Naive thymus-derived CD4-positive, alpha-beta T cell (primary cell): ENCODE measurements at regions of chr3 and their contacts with region 1.

Region 1: DNA sequence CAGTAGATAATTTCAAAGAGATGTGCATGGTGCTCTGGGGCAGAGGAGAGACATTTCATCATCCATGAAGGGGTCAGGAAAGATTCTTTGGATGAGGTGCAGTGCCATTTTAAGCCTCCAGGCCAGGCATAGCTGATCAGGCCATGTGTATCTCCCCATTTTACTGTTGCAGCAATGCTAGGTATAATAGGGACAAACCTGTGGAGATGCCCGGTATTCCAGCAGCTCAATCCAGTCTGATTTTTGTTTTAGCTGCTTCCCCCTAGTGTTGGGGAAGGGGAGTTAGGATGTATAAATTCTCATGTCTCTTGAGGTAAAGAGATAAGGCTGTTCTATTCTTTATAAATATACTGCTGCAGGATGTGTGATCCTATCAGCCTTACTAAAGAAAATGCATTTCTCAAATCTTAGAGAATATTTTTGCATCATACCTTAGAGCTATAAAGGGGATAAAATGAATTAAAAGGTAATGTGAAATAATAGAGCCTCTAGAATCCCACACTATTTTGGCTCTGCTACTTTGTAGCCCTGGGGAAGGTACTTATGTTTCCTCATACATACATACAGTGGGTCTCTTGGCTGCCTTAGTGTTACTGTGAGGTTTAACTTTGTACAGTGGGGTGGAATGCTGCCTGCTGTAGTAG is 5.2 kb downstream of the CDV3 start:
- DNase-seq: no peak
- ATAC-seq: no peak
- H3K4me3 ChIP-seq: peak overlapping the region; percentile 12
- H3K4me3 Mint-ChIP-seq: peak overlapping the region; percentile 39 to 99 (median 90)
- H3K27ac ChIP-seq: no peak overlapping the region
- H3K27ac Mint-ChIP-seq: peak overlapping the region in 4 of 9 donors; percentile 31 to 86 (median 61)
- H3K4me1 ChIP-seq: peaks cover 30 to 49% of the 10 kb centered on the region in 2 donors
- H3K4me1 Mint-ChIP-seq: peaks cover 45 to 83% (median 76%) of the 10 kb centered on the region in 7 donors
- H3K27me3 ChIP-seq: no peaks in the 10 kb centered on the region
- H3K27me3 Mint-ChIP-seq: no peaks in the 10 kb centered on the region

Region 2: GRCh38 chr3:133591271-133591742 is 12.6 kb after region 1 on chr3:
- CTCF ChIA-PET with region 1: interaction called, 3 read pairs
- POLR2A ChIA-PET with region 1: interaction called, 3 read pairs
- intact Hi-C with region 1: loop called in 1 of 2 experiments (anchors 1 kb)
- DNase-seq: no peak
- ATAC-seq: no peak
- H3K4me3 ChIP-seq: no peak overlapping the region
- H3K4me3 Mint-ChIP-seq: no peak overlapping the region
- H3K27ac ChIP-seq: no peak overlapping the region
- H3K27ac Mint-ChIP-seq: peak overlapping the region in 4 of 9 donors; percentile 9 to 67 (median 56)
- H3K4me1 ChIP-seq: no peaks in the 10 kb centered on the region
- H3K4me1 Mint-ChIP-seq: peaks cover 2 to 28% (median 9%) of the 10 kb centered on the region in 7 donors
- H3K27me3 ChIP-seq: no peaks in the 10 kb centered on the region
- H3K27me3 Mint-ChIP-seq: no peaks in the 10 kb centered on the region

Region 3: DNA sequence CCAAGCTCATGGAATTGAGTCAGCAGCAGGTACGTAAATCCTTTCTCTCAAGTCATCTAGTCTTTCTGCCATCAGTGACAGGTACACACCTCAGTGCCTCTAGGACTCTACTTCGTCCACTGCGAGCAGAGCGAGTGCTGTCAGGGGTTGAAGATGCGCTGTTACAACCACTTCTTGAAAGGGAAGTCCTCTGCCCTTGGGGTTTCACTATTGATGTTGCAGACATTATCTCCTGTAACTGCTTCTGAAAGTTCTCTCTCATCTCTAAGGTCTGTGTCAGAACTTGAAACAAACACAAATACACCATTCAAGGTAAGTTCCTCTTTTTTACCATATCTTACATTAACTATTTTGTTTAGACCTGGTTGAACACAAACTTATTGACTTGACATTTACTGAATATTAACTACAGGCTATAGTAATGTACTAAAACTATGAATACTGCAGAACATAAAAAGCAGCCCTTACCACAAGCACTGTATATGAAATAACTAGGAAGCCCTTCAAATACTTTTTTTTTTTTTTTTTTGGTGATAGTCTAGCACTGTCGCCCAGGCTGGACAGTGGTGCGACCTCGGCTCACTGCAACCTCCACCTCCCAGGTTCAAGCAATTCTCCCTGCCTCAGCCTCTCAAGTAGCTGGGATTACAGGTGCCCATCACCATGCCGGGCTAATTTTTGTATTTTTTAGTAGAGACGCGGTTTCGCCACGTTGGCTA is 41.6 kb after region 1 on chr3:
- CTCF ChIA-PET with region 1: no interaction called
- POLR2A ChIA-PET with region 1: interaction called, 4 read pairs
- intact Hi-C with region 1: loop called in 1 of 2 experiments (anchors 5 kb)
- DNase-seq: no peak
- ATAC-seq: peak; percentile 31
- H3K4me3 ChIP-seq: no peak overlapping the region
- H3K4me3 Mint-ChIP-seq: no peak overlapping the region
- H3K27ac ChIP-seq: no peak overlapping the region
- H3K27ac Mint-ChIP-seq: peak overlapping the region in 2 of 9 donors; percentile 38 to 44
- H3K4me1 ChIP-seq: no peaks in the 10 kb centered on the region
- H3K4me1 Mint-ChIP-seq: peaks cover 0 to 5% (median 0%) of the 10 kb centered on the region in 7 donors
- H3K27me3 ChIP-seq: no peaks in the 10 kb centered on the region
- H3K27me3 Mint-ChIP-seq: no peaks in the 10 kb centered on the region